ENCODE measurements at regions of chr13 and their contacts with region 1.

Region 1: DNA sequence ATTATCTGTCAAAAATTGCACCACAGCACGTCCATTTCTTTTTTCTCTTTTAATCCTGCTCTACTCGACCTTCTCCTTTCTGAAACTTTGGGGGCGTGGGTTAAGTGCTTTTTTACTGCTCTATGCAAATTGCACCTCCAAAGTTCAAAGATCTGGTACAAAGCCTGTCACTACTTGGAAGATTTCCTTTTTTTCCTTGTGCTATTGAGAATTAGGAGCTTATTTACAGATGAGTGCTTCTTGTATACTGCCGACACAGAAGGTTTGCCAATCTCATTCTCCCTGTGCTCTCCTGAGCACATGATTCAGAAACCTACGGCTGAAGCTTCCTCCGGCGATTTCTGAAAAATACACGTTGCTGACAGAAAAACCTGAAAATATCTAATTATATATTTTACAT is 94.8 kb downstream of the TEX29 start:
- DNase-seq: no peak
- H3K4me3 ChIP-seq: no peak overlapping the region
- H3K27ac ChIP-seq: no peak overlapping the region
- H3K4me1 ChIP-seq: no peaks in the 10 kb centered on the region
- H3K27me3 ChIP-seq: peaks cover 18% of the 10 kb centered on the region
- CTCF ChIP-seq: no peak

Region 2: GRCh38 chr13:111359237-111359915 is 55.9 kb before region 1 on chr13:
- CTCF ChIA-PET with region 1: no interaction called
- dilution Hi-C with region 1: loop called (anchors 5 kb)
- in situ Hi-C with region 1: no loop called
- intact Hi-C with region 1: no loop called
- DNase-seq: no peak
- H3K4me3 ChIP-seq: no peak overlapping the region
- H3K27ac ChIP-seq: no peak overlapping the region
- H3K4me1 ChIP-seq: no peaks in the 10 kb centered on the region
- H3K27me3 ChIP-seq: no peaks in the 10 kb centered on the region
- CTCF ChIP-seq: no peak

Region 3: DNA sequence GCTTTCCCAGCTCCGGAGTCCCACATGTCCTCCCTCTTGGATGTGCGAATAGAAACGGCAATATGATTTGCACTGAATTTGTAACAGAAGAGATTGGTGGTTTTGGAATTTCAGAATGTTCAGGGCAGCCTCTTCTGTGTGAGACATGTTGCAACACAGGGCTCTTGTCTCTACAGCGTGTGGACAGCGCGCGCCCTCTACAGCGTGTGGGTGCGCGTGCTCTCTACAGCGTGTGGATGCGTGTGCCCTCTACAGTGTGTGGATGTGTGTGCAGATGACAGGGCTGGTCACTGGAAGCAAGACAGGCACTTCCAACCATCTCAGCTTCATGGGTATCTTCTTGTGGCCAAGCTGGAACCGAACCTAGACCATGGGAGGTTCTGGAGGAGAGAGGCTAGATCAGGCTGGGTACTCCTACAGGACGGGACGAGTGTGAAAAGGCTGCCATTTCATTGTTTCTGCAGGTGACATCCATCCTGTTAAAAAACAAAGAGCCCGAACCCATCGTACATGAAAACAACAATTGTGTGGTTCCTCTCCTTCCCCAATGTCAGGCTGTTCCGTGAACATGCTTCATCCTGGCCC is 16.4 kb before region 1 on chr13:
- CTCF ChIA-PET with region 1: no interaction called
- dilution Hi-C with region 1: no loop called
- in situ Hi-C with region 1: no loop called
- intact Hi-C with region 1: no loop called
- DNase-seq: no peak
- H3K4me3 ChIP-seq: no peak overlapping the region
- H3K27ac ChIP-seq: no peak overlapping the region
- H3K4me1 ChIP-seq: no peaks in the 10 kb centered on the region
- H3K27me3 ChIP-seq: no peaks in the 10 kb centered on the region
- CTCF ChIP-seq: no peak

Region 4: GRCh38 chr13:111449041-111449440 is 33.8 kb after region 1 on chr13:
- CTCF ChIA-PET with region 1: no interaction called
- dilution Hi-C with region 1: no loop called
- in situ Hi-C with region 1: no loop called
- intact Hi-C with region 1: no loop called
- DNase-seq: peak; percentile 1
- H3K4me3 ChIP-seq: no peak overlapping the region
- H3K27ac ChIP-seq: no peak overlapping the region
- H3K4me1 ChIP-seq: no peaks in the 10 kb centered on the region
- H3K27me3 ChIP-seq: no peaks in the 10 kb centered on the region
- CTCF ChIP-seq: no peak

Measured in mammary epithelial cell (primary cell).